ENCODE measurements at regions of chr4 and their contacts with region 1.

Region 1: DNA sequence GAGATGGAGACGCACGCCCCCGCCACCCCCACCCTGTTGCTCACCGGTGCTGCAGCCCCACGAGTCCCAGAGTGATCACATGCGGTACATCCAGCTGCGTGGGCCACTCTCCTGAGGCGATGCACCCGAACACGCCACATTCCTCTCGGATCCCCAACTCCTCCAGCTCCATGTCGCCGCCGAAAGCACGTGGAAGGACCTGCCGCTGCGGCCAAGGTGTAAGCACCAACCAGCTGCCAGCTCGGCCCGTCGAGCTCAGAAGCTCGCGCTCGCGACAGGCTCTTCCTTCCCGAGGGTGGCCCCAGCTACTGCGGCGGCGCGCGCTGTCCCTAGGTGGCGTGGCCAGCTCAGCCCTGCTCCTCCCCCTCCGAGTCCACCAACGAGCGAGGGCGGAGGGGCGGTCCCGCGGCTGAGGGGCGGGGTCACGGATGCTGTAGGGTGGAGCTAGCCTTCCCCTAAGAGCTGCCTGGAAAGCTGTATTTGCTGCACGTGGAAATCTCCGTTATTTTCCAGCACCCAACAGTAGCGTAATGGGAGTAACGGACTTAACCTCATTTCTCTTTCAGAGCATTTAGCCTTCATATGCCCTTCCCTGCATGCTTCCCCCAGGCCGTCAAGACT is at the start of gene PPAT:
- DNase-seq: peak; percentile 98
- ATAC-seq: peak; percentile 86
- H3K4me3 Mint-ChIP-seq: peak within 1 kb of the TSS; percentile 90
- H3K27ac Mint-ChIP-seq: peak within 1 kb of the TSS; percentile 97
- H3K4me1 Mint-ChIP-seq: peaks cover 37% of the 10 kb centered on the region
- H3K27me3 Mint-ChIP-seq: no peaks in the 10 kb centered on the region
- CTCF ChIP-seq: no peak
- total RNA-seq, gene PPAT: 11.7 and 12.9 TPM in 2 replicates

Region 2: GRCh38 chr4:55853484-55854046 is 581.9 kb before region 1 on chr4 and contains the start of gene EXOC1:
- CTCF ChIA-PET with region 1: no interaction called
- POLR2A ChIA-PET with region 1: no interaction called
- intact Hi-C with region 1: loop called (anchors 1 kb)
- DNase-seq: peak; percentile 97
- ATAC-seq: peak; percentile 99
- H3K4me3 Mint-ChIP-seq: no peak within 1 kb of the TSS
- H3K27ac Mint-ChIP-seq: peak within 1 kb of the TSS; percentile 85
- H3K4me1 Mint-ChIP-seq: peaks cover 15% of the 10 kb centered on the region
- H3K27me3 Mint-ChIP-seq: peaks cover 8% of the 10 kb centered on the region
- CTCF ChIP-seq: no peak
- total RNA-seq, gene EXOC1: 28.7 and 34.8 TPM in 2 replicates

Region 3: GRCh38 chr4:56400560-56400959 is 34.9 kb before region 1 on chr4:
- CTCF ChIA-PET with region 1: no interaction called
- POLR2A ChIA-PET with region 1: no interaction called
- intact Hi-C with region 1: no loop called
- DNase-seq: no peak
- ATAC-seq: no peak
- H3K4me3 Mint-ChIP-seq: no peak overlapping the region
- H3K27ac Mint-ChIP-seq: no peak overlapping the region
- H3K4me1 Mint-ChIP-seq: no peaks in the 10 kb centered on the region
- H3K27me3 Mint-ChIP-seq: no peaks in the 10 kb centered on the region
- CTCF ChIP-seq: no peak

Region 4: DNA sequence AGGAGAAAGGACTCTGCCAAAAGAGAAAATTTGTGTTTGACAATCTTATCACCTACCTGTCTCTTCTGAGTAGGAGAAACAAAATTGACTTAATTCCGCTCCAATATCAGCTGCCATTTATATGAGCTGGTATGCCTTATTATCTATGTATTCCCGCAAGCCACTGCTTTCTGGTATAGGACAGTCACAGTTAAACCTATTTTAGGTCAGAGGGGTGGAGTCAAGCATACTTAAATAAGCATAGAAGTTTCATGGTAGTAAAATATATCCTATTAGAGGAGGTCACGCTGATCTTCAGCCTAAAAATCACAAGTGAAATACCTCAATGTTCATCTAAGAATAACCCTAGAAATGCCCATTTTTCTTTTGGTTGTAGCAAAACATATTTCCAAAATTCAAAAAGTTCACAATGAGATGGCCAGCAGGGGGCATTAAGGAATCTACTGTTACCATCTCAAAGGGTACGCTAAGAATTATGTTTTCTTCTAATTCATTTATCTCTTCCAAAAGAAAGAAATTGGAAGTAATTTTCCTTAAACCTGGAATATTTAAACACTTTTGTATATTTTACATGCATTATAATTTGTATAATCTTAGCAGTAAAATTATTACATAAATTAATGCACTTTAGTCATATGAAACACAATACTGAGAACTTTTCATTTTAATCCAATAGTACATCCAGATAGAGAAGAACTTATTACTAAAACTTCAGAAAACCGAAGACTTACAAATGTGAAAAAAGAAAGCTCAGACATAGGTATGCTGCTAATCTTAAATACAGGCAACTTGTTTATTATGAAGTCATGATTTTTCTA is 10.5 kb before region 1 on chr4:
- CTCF ChIA-PET with region 1: interaction called, 38 read pairs
- POLR2A ChIA-PET with region 1: interaction called, 8 read pairs
- intact Hi-C with region 1: loop called (anchors 1 kb)
- DNase-seq: no peak
- ATAC-seq: no peak
- H3K4me3 Mint-ChIP-seq: no peak overlapping the region
- H3K27ac Mint-ChIP-seq: no peak overlapping the region
- H3K4me1 Mint-ChIP-seq: peaks cover 12% of the 10 kb centered on the region
- H3K27me3 Mint-ChIP-seq: no peaks in the 10 kb centered on the region
- CTCF ChIP-seq: peak; percentile 75

Region 5: GRCh38 chr4:56467284-56468096 is 32.1 kb after region 1 on chr4 and contains the start of gene SRP72:
- CTCF ChIA-PET with region 1: interaction called, 4 read pairs
- POLR2A ChIA-PET with region 1: interaction called, 45 read pairs
- intact Hi-C with region 1: loop called (anchors 1 kb)
- DNase-seq: peak; percentile 83
- ATAC-seq: peak; percentile 96
- H3K4me3 Mint-ChIP-seq: peak within 1 kb of the TSS; percentile 99
- H3K27ac Mint-ChIP-seq: peak within 1 kb of the TSS; percentile 96
- H3K4me1 Mint-ChIP-seq: peaks cover 57% of the 10 kb centered on the region
- H3K27me3 Mint-ChIP-seq: no peaks in the 10 kb centered on the region
- CTCF ChIP-seq: no peak
- total RNA-seq, gene SRP72: 139 TPM in 2 replicates

Region 6: DNA sequence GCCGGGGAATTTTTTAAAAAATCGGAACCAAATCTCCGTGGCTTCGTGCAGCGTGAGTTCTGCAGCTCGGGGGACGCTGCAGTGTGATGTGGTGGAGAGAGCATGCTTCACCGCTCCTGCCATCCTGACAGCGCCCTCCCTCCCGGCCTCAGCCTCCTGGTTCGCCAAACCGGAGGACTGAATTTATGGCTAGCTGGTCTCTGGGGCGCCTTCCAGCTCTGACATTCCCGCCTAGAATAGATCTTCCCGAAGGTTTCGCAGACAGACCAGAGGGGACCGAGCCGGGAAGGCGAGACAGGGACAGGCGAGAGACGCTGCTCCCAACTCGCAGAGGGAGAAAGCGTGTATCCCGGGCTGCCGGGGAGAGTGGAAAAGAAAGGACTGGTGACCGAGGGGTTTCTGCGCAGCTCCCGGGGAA is 219.8 kb after region 1 on chr4:
- CTCF ChIA-PET with region 1: no interaction called
- POLR2A ChIA-PET with region 1: no interaction called
- intact Hi-C with region 1: loop called (anchors 10 kb)
- DNase-seq: peak; percentile 23
- ATAC-seq: peak; percentile 25
- H3K4me3 Mint-ChIP-seq: peak overlapping the region; percentile 92
- H3K27ac Mint-ChIP-seq: peak overlapping the region; percentile 46
- H3K4me1 Mint-ChIP-seq: peaks cover 65% of the 10 kb centered on the region
- H3K27me3 Mint-ChIP-seq: peaks cover 2% of the 10 kb centered on the region
- CTCF ChIP-seq: no peak

Region 7: GRCh38 chr4:56821381-56822243 is 386.2 kb after region 1 on chr4 and contains the start of gene SPINK2:
- CTCF ChIA-PET with region 1: no interaction called
- POLR2A ChIA-PET with region 1: interaction called, 3 read pairs
- intact Hi-C with region 1: loop called (anchors 1 kb)
- DNase-seq: peak; percentile 58
- ATAC-seq: peak; percentile 87
- H3K4me3 Mint-ChIP-seq: peak within 1 kb of the TSS; percentile 81
- H3K27ac Mint-ChIP-seq: peak within 1 kb of the TSS; percentile 24
- H3K4me1 Mint-ChIP-seq: peaks cover 31% of the 10 kb centered on the region
- H3K27me3 Mint-ChIP-seq: no peaks in the 10 kb centered on the region
- CTCF ChIP-seq: no peak
- total RNA-seq, gene SPINK2: 1.2 TPM in 1 of 2 replicates, not detected in the other

Region 8: GRCh38 chr4:56977321-56978012 is 542.1 kb after region 1 on chr4 and contains the start of gene NOA1:
- CTCF ChIA-PET with region 1: no interaction called
- POLR2A ChIA-PET with region 1: interaction called, 60 read pairs
- intact Hi-C with region 1: loop called (anchors 1 kb)
- DNase-seq: peak; percentile 98
- ATAC-seq: peak; percentile 86
- H3K4me3 Mint-ChIP-seq: peak within 1 kb of the TSS; percentile 99
- H3K27ac Mint-ChIP-seq: peak within 1 kb of the TSS; percentile 96
- H3K4me1 Mint-ChIP-seq: peaks cover 70% of the 10 kb centered on the region
- H3K27me3 Mint-ChIP-seq: no peaks in the 10 kb centered on the region
- CTCF ChIP-seq: no peak
- total RNA-seq, gene NOA1: 24.1 and 25.0 TPM in 2 replicates

Measured in activated B cell treated with CpG ODN at 0.5 μM for 24 hours (primary cell).